HepG2 (cell line): ENCODE measurements at regions of chr17 and their contacts with region 1.

Region 1: GRCh38 chr17:55587608-55588139 is 76.4 kb upstream of the SMIM36 start:
- DNase-seq: no peak
- ATAC-seq: no peak
- H3K4me3 ChIP-seq: no peak overlapping the region
- H3K27ac ChIP-seq: no peak overlapping the region
- H3K4me1 ChIP-seq: no peaks in the 10 kb centered on the region
- H3K27me3 ChIP-seq: no peaks in the 10 kb centered on the region
- CTCF ChIP-seq: no peak
- EP300 ChIP-seq: no peak
- POLR2A ChIP-seq: no peak
- RAD21 ChIP-seq: no peak

Region 2: DNA sequence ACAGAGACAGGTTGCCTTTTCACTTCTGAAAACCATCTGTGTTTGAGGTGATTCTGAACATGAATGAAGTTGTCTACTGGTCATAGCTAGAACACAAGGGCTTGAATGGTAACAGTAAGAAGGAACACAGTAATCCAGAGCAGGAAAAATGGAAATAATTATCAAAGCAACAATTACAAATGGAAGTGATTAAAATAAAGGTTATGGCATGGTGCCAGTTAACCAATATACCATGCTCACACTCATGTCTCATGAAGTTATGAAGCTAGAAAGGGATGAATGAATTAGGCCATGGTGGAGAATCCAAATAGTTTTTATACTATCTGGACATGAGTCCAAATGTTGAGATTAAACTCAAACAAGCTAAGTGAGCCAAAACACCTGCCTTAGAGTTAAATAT is 1755.3 kb before region 1 on chr17:
- CTCF ChIA-PET with region 1: no interaction called
- POLR2A ChIA-PET with region 1: no interaction called
- in situ Hi-C with region 1: no loop called
- intact Hi-C with region 1: loop called (anchors 5 kb)
- DNase-seq: no peak
- ATAC-seq: no peak
- H3K4me3 ChIP-seq: no peak overlapping the region
- H3K27ac ChIP-seq: no peak overlapping the region
- H3K4me1 ChIP-seq: no peaks in the 10 kb centered on the region
- H3K27me3 ChIP-seq: no peaks in the 10 kb centered on the region
- CTCF ChIP-seq: no peak
- EP300 ChIP-seq: no peak
- POLR2A ChIP-seq: no peak
- RAD21 ChIP-seq: no peak

Region 3: GRCh38 chr17:55624772-55625433 is 37.2 kb after region 1 on chr17:
- CTCF ChIA-PET with region 1: no interaction called
- POLR2A ChIA-PET with region 1: no interaction called
- in situ Hi-C with region 1: no loop called
- intact Hi-C with region 1: no loop called
- DNase-seq: no peak
- ATAC-seq: no peak
- H3K4me3 ChIP-seq: no peak overlapping the region
- H3K27ac ChIP-seq: no peak overlapping the region
- H3K4me1 ChIP-seq: no peaks in the 10 kb centered on the region
- H3K27me3 ChIP-seq: no peaks in the 10 kb centered on the region
- CTCF ChIP-seq: no peak
- EP300 ChIP-seq: no peak
- POLR2A ChIP-seq: no peak
- RAD21 ChIP-seq: no peak